Testis (tissue), 5 donors: ENCODE measurements at regions of chr11 and their contacts with region 1.

Region 1: DNA sequence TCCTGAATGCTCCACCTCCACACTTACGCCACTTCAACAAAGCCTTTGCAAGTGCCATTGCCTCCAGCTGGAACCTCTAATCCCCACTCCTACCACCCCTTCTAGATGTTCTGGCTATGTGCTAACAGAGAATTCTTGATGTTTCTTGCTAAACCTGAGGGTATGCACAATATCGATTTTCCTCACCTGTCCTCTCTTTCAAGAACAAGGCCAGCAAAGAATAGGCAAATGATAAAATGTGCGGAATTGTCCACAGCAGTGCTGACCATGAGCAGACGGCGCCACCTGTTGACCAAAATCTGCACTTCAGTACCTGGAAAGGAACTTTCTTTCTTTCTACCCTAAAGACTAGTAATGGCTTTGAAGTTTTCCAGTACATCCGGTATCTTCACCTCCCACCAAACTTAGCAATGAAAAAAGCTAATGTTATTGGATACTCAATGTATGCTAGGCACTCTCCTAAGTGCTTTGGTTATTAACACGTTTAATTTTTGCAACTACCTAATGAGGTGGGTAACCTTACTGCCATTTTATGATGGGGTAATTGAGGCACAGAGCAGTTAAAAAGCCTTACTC is 3.4 kb downstream of the TIMM10 start:
- DNase-seq: peak; percentile 87
- H3K4me3 ChIP-seq: no peak overlapping the region
- H3K27ac ChIP-seq: no peak overlapping the region
- H3K4me1 ChIP-seq: peaks cover 13% of the 10 kb centered on the region
- H3K27me3 ChIP-seq: no peaks in the 10 kb centered on the region
- CTCF ChIP-seq: peak; percentile 78 to 93 (median 92)
- POLR2A ChIP-seq: no peak

Region 2: GRCh38 chr11:57387289-57388030 is 139.7 kb before region 1 on chr11:
- intact Hi-C with region 1: no loop called
- DNase-seq: no peak
- H3K4me3 ChIP-seq: no peak overlapping the region
- H3K27ac ChIP-seq: no peak overlapping the region
- H3K4me1 ChIP-seq: no peaks in the 10 kb centered on the region
- H3K27me3 ChIP-seq: no peaks in the 10 kb centered on the region
- CTCF ChIP-seq: no peak
- POLR2A ChIP-seq: no peak

Region 3: GRCh38 chr11:57456960-57457642 is 70.0 kb before region 1 on chr11:
- intact Hi-C with region 1: loop called (anchors 5 kb)
- DNase-seq: peak; percentile 95
- H3K4me3 ChIP-seq: no peak overlapping the region
- H3K27ac ChIP-seq: no peak overlapping the region
- H3K4me1 ChIP-seq: peaks cover 31% of the 10 kb centered on the region
- H3K27me3 ChIP-seq: no peaks in the 10 kb centered on the region
- CTCF ChIP-seq: peak; percentile 85 to 99 (median 97)
- POLR2A ChIP-seq: no peak